ENCODE measurements at regions of chr10 and their contacts with region 1.

Region 1: DNA sequence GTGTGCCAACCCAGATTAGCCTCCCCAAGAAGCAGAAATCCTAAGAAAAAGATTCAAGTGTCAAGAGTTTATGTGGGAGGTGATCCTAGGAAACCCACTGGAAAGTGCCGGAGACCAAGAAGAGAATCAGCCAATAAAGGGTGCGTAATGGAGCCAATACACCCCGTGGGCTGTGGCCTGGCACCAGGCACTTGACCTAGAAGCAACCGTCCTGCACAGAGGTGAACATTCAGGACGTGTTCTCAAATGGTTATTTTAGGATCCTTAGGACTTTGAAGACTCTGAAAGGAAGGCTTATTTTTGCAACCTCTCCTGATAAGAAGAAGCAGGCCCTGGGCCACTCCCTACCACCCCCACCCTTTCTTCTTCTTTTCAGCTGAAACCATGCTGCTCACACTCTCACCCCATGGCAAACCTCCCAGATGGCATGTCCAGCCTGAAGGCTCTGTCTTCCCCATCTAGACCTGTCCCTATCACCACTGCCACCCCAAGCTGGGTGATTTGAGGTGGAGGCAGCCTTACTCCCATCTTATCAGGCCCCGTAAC is 46.6 kb downstream of the VSTM4 start:
- DNase-seq: peak in 1 of 7 donors; percentile 23
- H3K4me3 ChIP-seq: no peak overlapping the region
- H3K27ac ChIP-seq: peak overlapping the region in 2 of 5 donors; percentile 39 to 56
- H3K4me1 ChIP-seq: peaks cover 25 to 51% of the 10 kb centered on the region in 2 donors
- H3K27me3 ChIP-seq: no peaks in the 10 kb centered on the region
- CTCF ChIP-seq: no peak
- POLR2A ChIP-seq: no peak

Region 2: GRCh38 chr10:49115015-49115795 is 46.5 kb after region 1 on chr10 and contains the start of gene VSTM4:
- intact Hi-C with region 1: loop called in 1 of 2 experiments (anchors 10 kb)
- DNase-seq: peak; percentile 49 to 65 (median 61)
- H3K4me3 ChIP-seq: peak within 1 kb of the TSS in 3 of 4 donors; percentile 31 to 87 (median 39)
- H3K27ac ChIP-seq: peak within 1 kb of the TSS in 4 of 5 donors; percentile 71 to 92 (median 86)
- H3K4me1 ChIP-seq: peaks cover 38 to 46% of the 10 kb centered on the region in 2 donors
- H3K27me3 ChIP-seq: no peaks in the 10 kb centered on the region
- CTCF ChIP-seq: peak in 1 of 6 experiments; percentile 10
- POLR2A ChIP-seq: peak in 1 of 2 donors; percentile 34
- total RNA-seq, gene VSTM4: 43.9 to 136 (median 71.9) TPM